A549 (cell line): ENCODE measurements at regions of chr20 and their contacts with region 1.

Region 1: DNA sequence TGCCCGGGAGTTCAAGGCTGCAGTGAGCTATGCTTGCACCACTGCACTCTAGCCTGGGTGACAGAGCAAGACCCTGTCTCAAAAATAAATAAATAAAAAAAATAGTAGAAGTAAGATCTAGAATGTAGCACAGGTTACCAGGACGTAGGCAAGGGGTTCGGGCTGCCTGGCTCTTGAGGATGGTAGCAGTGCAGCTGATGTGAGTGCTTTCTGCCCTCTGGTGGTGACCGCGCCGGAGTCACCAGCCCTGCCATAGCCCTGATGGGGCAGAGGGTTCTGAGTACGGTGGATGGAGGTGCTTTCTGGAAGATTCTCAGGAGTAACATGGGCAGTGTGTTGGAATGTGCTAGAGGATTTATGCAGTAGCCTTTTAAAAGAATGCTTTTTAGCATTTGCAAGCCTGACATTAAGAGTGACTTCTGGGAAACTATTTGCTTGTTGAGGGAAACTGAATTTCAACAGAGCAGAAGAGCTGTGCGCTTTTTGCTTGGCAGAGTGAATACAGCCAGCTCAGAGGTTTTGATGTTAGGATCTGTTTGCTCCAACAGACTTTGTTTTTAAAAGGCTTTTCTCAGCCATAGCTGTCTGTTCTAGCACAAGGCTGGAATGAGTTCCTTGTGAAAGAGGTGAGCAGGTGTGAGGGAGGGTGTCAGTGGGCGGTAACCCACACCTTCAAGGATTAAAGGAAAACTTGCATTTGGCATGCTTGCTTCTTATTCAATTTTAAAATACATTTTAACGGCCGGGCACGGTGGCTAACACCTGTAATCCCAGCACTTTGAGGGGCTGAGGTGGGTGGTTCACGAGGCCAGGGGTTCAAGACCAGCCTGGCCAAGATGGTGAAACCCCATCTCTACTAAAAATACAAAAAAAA is 65.9 kb downstream of the PTPN1 start:
- DNase-seq: peak; percentile 70 to 80
- ATAC-seq: peak; percentile 92 to 95
- H3K4me3 ChIP-seq: no peak overlapping the region
- H3K27ac ChIP-seq: peak overlapping the region in 1 of 2 experiments; percentile 48; a peak in 1 of 6 replicates
- H3K4me1 ChIP-seq: 0 out of 3 replicates have a peak, but pooled peaks cover 3% of the 10 kb centered on the region
- CTCF ChIP-seq: peak; percentile 85
- EP300 ChIP-seq: no peak
- POLR2A ChIP-seq: no peak
- RAD21 ChIP-seq: peak; percentile 87 to 91

Region 2: GRCh38 chr20:50460460-50461267 is 115.4 kb before region 1 on chr20:
- CTCF ChIA-PET with region 1: interaction called, 153 read pairs
- POLR2A ChIA-PET with region 1: no interaction called
- DNase-seq: peak; percentile 86 to 95
- ATAC-seq: peak; percentile 83 to 94
- H3K4me3 ChIP-seq: no peak overlapping the region
- H3K27ac ChIP-seq: peak overlapping the region; percentile 91 to 94
- H3K4me1 ChIP-seq: peaks cover 62% of the 10 kb centered on the region
- CTCF ChIP-seq: peak; percentile 88
- EP300 ChIP-seq: no peak
- POLR2A ChIP-seq: no peak
- RAD21 ChIP-seq: peak; percentile 97 to 99

Region 3: GRCh38 chr20:50484276-50484976 is 91.7 kb before region 1 on chr20:
- CTCF ChIA-PET with region 1: interaction called, 28 read pairs
- POLR2A ChIA-PET with region 1: no interaction called
- DNase-seq: no peak
- ATAC-seq: no peak
- H3K4me3 ChIP-seq: no peak overlapping the region
- H3K27ac ChIP-seq: peak overlapping the region; percentile 62 to 82; a peak in 5 of 6 replicates
- H3K4me1 ChIP-seq: no peaks in the 10 kb centered on the region
- CTCF ChIP-seq: no peak
- EP300 ChIP-seq: no peak
- POLR2A ChIP-seq: no peak
- RAD21 ChIP-seq: no peak

Region 4: GRCh38 chr20:50540620-50541605 is 35.2 kb before region 1 on chr20:
- CTCF ChIA-PET with region 1: interaction called, 10 read pairs
- POLR2A ChIA-PET with region 1: no interaction called
- DNase-seq: peak; percentile 36 to 67
- ATAC-seq: peak; percentile 70 to 92; a peak in 5 of 6 replicates
- H3K4me3 ChIP-seq: no peak overlapping the region
- H3K27ac ChIP-seq: peak overlapping the region; percentile 44 to 76
- H3K4me1 ChIP-seq: peaks cover 27% of the 10 kb centered on the region
- CTCF ChIP-seq: no peak
- EP300 ChIP-seq: no peak
- POLR2A ChIP-seq: no peak
- RAD21 ChIP-seq: no peak; a peak in 1 of 5 replicates

Region 5: DNA sequence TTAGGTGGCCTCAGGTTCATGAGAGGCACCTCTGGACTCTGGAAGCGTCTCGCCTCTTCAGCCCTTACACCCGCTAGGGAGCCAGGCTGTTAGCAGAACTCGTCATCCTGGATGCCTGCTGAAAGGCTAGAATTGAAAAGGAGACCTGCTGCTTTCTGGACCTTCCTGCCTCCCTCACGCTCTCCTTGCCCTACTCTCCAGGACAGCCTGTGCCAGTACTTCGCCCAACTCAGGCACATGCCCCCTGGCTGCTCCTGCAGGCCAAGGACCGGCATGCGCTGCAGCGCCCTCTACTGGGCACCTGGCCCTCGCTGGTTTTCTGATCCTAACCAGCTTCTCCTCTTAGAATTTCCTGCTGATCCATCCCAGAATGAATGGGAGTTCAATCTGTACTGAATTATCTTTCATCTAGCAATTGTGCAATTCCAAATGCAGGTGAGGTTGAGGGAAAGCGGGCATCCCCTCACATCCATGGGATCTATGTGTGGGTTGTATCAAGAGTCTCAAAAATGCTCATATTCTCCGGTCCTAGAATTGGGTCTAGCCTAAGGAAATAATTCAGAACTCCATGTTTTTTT is 12.0 kb after region 1 on chr20:
- CTCF ChIA-PET with region 1: interaction called, 85 read pairs
- POLR2A ChIA-PET with region 1: no interaction called
- DNase-seq: peak; percentile 72 to 90
- ATAC-seq: peak; percentile 78 to 88; a peak in 5 of 6 replicates
- H3K4me3 ChIP-seq: no peak overlapping the region
- H3K27ac ChIP-seq: 0 out of 6 replicates have a peak overlapping the region, but pooled peaks of 1 of the 2 experiments have one; percentile 4
- H3K4me1 ChIP-seq: no peaks in the 10 kb centered on the region
- CTCF ChIP-seq: peak; percentile 88
- EP300 ChIP-seq: no peak
- POLR2A ChIP-seq: no peak
- RAD21 ChIP-seq: peak; percentile 57 to 63